ENCODE measurements at regions of chr1 and their contacts with region 1.

Region 1: GRCh38 chr1:209113521-209113920 is 470.0 kb upstream of the CAMK1G start:
- DNase-seq: no peak
- H3K4me3 ChIP-seq: no peak overlapping the region
- H3K27ac ChIP-seq: no peak overlapping the region
- H3K4me1 ChIP-seq: no peaks in the 10 kb centered on the region
- H3K27me3 ChIP-seq: no peaks in the 10 kb centered on the region
- CTCF ChIP-seq: no peak
- POLR2A ChIP-seq: no peak

Region 2: DNA sequence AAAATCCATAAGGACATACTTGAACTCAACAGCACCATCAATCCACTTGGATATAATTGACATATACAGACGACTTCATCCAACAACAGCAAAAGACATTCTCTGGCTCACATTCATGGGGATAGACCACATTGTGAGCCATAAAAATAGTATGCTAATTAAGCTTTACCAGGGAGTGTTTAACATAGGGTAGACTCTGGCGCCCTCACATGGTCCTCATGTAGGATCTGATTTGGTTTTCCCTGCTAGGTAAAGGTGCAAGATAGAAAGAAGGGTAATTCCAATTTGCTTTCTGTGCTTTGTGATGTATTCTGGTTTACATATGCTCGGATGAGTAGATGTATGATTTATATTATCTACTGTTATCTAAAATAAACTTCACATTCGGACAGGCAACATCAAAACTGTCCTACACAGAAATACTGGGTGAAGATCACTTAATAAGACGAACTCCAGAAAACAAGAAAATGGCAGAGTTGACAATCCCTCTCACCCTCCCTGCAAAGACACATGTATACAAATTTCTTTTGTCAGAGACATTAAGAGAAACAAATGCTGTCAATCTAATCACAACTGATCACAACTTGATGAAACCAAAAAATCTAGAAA is 1440.9 kb before region 1 on chr1:
- intact Hi-C with region 1: loop called (anchors 10 kb)
- DNase-seq: no peak
- H3K4me3 ChIP-seq: no peak overlapping the region
- H3K27ac ChIP-seq: no peak overlapping the region
- H3K4me1 ChIP-seq: peaks cover 9% of the 10 kb centered on the region
- H3K27me3 ChIP-seq: no peaks in the 10 kb centered on the region
- CTCF ChIP-seq: no peak
- POLR2A ChIP-seq: no peak

Region 3: DNA sequence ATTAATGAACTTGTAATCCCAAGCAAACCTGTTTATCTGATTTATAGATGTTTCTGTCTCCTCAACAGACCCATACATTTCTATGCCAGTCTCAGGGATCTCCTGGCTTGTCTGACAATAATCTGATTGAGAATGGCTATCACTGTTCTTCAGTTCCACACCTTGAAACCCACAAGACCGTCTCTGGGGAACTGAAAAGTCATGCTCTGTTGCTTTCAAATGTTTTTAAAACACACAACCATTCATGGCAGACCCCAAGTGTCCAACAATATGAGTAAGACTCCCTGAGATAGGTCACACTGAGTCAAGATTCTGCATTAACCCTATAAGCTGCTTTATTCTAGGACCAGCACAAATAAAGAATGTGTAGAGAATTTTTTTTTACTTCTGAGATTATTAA is 258.1 kb before region 1 on chr1:
- intact Hi-C with region 1: no loop called
- DNase-seq: no peak
- H3K4me3 ChIP-seq: no peak overlapping the region
- H3K27ac ChIP-seq: no peak overlapping the region
- H3K4me1 ChIP-seq: no peaks in the 10 kb centered on the region
- H3K27me3 ChIP-seq: no peaks in the 10 kb centered on the region
- CTCF ChIP-seq: no peak
- POLR2A ChIP-seq: no peak

Region 4: GRCh38 chr1:210489491-210489890 is 1376.0 kb after region 1 on chr1:
- intact Hi-C with region 1: no loop called
- DNase-seq: no peak
- H3K4me3 ChIP-seq: no peak overlapping the region
- H3K27ac ChIP-seq: no peak overlapping the region
- H3K4me1 ChIP-seq: no peaks in the 10 kb centered on the region
- H3K27me3 ChIP-seq: no peaks in the 10 kb centered on the region
- CTCF ChIP-seq: no peak
- POLR2A ChIP-seq: no peak

Measured in vagina (tissue), 2 donors.